Posterior cingulate gyrus (tissue), 11 donors: ENCODE measurements at regions of chr11 and their contacts with region 1.

Region 1: DNA sequence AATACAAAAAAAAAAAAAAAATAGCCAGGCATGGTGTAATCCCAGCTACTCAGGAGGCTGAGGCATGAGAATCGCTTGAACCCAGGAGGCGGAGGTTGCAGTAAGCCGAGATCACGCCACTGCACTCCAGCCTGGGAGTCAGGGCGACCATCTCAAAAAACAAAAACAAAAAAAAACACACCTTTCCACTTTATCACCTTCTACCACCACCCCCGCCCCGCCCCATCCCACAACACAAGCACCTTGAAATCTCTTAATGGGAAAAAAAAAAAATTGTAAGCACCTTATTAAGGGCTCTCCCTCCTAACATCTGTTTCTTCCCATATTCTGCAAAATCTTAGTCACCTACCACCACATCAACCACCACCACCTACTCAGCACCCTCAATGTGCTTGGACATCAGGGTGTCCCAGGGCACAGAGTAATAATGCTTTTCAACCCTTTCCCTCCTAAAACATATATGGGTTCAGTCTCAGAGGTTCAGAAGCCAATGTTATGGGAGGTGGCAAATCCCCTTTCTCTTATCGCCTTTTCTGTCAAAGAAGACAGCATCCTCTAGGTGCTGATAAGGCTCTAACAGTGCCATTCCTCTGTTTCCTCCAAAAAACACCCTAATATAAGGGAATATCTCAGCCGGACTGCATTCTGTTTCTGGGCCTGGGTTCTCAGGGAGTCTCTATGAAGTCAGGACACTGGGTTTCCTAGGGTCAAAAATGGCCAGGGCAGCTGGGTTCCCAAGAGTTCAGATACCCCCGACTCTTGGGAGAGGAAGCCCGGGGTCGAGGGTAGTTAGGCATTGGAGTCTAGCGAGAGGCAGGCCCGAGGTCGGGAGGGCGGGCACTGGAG is 718 bp downstream of the INTS5 start:
- DNase-seq: peak in 1 of 10 donors; percentile 86

Region 2: DNA sequence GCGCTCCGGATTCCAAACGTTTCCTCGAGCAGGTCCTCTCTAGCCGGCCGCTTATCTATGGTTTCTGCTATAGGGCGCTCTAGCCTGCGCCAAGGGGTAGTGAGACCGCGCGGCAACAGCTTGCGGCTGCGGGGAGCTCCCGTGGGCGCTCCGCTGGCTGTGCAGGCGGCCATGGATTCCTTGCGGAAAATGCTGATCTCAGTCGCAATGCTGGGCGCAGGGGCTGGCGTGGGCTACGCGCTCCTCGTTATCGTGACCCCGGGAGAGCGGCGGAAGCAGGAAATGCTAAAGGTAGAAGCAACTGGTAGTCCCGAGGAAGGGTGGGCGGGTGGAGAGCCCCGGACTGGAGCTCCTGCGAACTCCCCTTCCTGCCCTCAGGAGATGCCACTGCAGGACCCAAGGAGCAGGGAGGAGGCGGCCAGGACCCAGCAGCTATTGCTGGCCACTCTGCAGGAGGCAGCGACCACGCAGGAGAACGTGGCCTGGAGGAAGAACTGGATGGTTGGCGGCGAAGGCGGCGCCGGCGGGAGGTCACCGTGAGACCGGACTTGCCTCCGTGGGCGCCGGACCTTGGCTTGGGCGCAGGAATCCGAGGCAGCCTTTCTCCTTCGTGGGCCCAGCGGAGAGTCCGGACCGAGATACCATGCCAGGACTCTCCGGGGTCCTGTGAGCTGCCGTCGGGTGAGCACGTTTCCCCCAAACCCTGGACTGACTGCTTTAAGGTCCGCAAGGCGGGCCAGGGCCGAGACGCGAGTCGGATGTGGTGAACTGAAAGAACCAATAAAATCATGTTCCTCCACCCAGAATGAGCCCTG is 19.4 kb after region 1 on chr11 and contains the starts of genes LBHD1 and UQCC3:
- intact Hi-C with region 1: loop called (anchors 2 kb)
- DNase-seq: peak; percentile 69 to 96 (median 79)

Region 3: GRCh38 chr11:62678770-62679696 is 26.6 kb after region 1 on chr11 and contains the start of gene UBXN1:
- intact Hi-C with region 1: loop called (anchors 1 kb)
- DNase-seq: peak; percentile 83 to 98 (median 88)